Aorta (tissue), 5 donors: ENCODE measurements at regions of chr7 and their contacts with region 1.

Region 1: DNA sequence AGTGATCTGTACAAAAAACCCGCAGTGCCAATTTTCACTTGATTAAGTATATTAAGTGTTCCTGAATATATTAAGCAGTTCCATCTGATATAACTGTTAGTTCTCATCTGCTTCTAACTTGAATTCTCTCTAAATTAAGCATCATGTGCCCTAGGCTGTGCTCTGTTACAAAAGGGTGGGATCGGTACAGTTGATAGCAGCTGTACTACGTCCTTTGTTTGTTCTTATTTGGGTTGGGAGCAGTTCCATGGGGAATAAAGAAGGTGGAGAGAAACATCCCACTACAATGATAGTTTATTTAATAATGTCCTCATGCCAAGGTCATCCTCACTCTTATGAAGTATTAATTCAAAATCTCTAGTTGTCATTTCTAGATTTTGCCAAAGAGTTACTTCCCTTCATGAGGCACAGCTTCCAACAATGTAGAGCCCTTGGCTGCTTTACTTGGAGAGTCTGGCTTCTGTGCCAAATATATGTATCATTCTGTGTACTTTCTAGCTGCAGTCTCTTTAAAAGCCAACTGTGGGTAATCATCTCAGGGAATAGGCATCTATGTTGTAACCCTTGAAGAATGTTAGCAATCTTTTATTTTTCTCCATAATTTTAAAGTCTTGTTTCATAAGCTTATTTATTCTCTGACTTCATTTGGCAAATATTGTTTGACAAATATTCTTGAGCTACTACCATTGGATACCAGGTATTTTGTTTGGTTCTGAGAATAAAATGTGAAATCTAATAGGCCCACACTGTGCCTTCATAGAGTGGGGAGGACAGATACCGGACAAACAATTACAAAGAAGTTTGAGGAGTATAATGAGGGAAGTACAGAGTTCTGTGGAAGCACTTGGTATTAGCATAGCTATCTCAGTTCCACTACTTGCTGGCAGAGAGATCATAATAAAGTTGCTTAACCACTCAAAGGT is 22.4 kb upstream of the AHR start:
- DNase-seq: no peak
- ATAC-seq: peak; percentile 88
- H3K4me3 ChIP-seq: no peak overlapping the region
- H3K27ac ChIP-seq: peak overlapping the region; percentile 82
- H3K4me1 ChIP-seq: peaks cover 1 to 2% of the 10 kb centered on the region in 2 donors
- H3K27me3 ChIP-seq: no peaks in the 10 kb centered on the region

Region 2: GRCh38 chr7:17095001-17095574 is 180.9 kb before region 1 on chr7:
- intact Hi-C with region 1: loop called in 1 of 2 experiments (anchors 10 kb)
- DNase-seq: peak in 1 of 2 donors; percentile 46
- ATAC-seq: no peak
- H3K4me3 ChIP-seq: no peak overlapping the region
- H3K27ac ChIP-seq: no peak overlapping the region
- H3K4me1 ChIP-seq: peaks cover 0 to 3% of the 10 kb centered on the region in 2 donors
- H3K27me3 ChIP-seq: no peaks in the 10 kb centered on the region

Region 3: GRCh38 chr7:17234398-17235031 is 41.5 kb before region 1 on chr7:
- intact Hi-C with region 1: loop called (anchors 5 kb)
- DNase-seq: peak in 1 of 2 donors; percentile 59
- ATAC-seq: peak; percentile 88
- H3K4me3 ChIP-seq: no peak overlapping the region
- H3K27ac ChIP-seq: peak overlapping the region in 1 of 2 donors; percentile 96
- H3K4me1 ChIP-seq: peaks cover 7 to 11% of the 10 kb centered on the region in 2 donors
- H3K27me3 ChIP-seq: no peaks in the 10 kb centered on the region